Upper lobe of right lung (tissue), 1 donor: ENCODE measurements at regions of chr18 and their contacts with region 1.

Region 1: GRCh38 chr18:70195852-70196434 is 9.5 kb downstream of the RTTN start:
- DNase-seq: no peak
- ATAC-seq: peak; percentile 72
- H3K4me3 ChIP-seq: no peak overlapping the region
- H3K27ac ChIP-seq: no peak overlapping the region
- H3K4me1 ChIP-seq: no peaks in the 10 kb centered on the region
- H3K27me3 ChIP-seq: no peaks in the 10 kb centered on the region
- CTCF ChIP-seq: peak; percentile 81

Region 2: DNA sequence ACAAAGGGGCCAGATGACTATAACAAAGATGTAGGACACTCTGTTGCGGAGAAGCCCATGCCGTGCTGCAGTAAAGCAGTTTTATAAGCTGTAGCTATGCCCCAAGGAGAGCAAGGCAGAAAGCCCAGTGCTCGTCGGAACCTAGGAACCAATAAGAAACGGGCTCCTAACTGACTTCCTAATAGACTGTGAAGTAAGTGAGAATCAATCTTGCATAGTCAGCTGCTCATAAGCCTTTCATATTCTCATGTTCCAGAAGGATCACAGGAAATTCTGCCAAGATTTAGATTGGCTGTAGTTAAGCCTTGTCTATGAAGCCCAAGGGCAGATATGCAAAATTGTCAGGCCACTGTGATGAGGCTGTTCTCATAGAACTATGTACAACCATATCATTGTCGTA is 88.9 kb before region 1 on chr18:
- intact Hi-C with region 1: no loop called
- DNase-seq: no peak
- ATAC-seq: no peak
- H3K4me3 ChIP-seq: no peak overlapping the region
- H3K27ac ChIP-seq: no peak overlapping the region
- H3K4me1 ChIP-seq: no peaks in the 10 kb centered on the region
- H3K27me3 ChIP-seq: no peaks in the 10 kb centered on the region
- CTCF ChIP-seq: no peak

Region 3: GRCh38 chr18:70256994-70257393 is 61.1 kb after region 1 on chr18:
- intact Hi-C with region 1: no loop called
- DNase-seq: no peak
- ATAC-seq: no peak
- H3K4me3 ChIP-seq: no peak overlapping the region
- H3K27ac ChIP-seq: no peak overlapping the region
- H3K4me1 ChIP-seq: no peaks in the 10 kb centered on the region
- H3K27me3 ChIP-seq: no peaks in the 10 kb centered on the region
- CTCF ChIP-seq: no peak

Region 4: GRCh38 chr18:70421471-70422390 is 225.8 kb after region 1 on chr18:
- intact Hi-C with region 1: loop called (anchors 10 kb)
- DNase-seq: peak; percentile 90
- ATAC-seq: peak; percentile 94
- H3K4me3 ChIP-seq: no peak overlapping the region
- H3K27ac ChIP-seq: peak overlapping the region; percentile 28
- H3K4me1 ChIP-seq: peaks cover 38% of the 10 kb centered on the region
- H3K27me3 ChIP-seq: no peaks in the 10 kb centered on the region
- CTCF ChIP-seq: no peak

Region 5: DNA sequence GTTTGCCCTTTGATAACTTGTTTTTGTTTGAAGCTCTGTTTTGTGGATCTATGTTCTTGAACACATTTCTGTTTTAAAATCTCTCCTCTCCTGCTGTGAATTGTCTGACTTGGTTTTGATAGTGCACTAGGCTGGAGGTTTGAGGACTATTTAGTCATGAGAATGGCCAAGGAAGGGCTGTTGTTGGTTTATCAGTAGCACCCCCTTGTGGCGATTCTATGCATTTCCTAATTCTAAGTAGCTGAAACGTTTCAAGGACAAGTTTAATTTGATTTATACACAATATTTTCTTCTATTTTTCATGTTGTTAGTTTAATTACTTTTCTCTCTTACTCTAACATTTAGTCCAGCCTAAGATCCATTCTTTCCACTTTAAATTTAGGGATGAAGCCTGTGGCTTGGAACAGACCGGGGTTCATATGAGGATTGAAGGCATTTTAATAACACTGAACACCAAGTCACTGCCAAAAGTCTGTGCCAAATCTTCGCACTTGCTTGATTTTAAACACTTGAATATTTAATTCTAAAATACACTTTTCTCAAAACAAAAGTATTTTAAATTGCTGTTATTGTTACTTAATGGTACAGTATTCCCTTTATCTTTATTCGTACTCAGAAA is 258.9 kb after region 1 on chr18:
- intact Hi-C with region 1: loop called (anchors 10 kb)
- DNase-seq: no peak
- ATAC-seq: peak; percentile 87
- H3K4me3 ChIP-seq: no peak overlapping the region
- H3K27ac ChIP-seq: no peak overlapping the region
- H3K4me1 ChIP-seq: no peaks in the 10 kb centered on the region
- H3K27me3 ChIP-seq: peaks cover 5% of the 10 kb centered on the region
- CTCF ChIP-seq: peak; percentile 81